Right ventricle myocardium inferior (tissue), 1 donor: ENCODE measurements at regions of chr17 and their contacts with region 1.

Region 1: DNA sequence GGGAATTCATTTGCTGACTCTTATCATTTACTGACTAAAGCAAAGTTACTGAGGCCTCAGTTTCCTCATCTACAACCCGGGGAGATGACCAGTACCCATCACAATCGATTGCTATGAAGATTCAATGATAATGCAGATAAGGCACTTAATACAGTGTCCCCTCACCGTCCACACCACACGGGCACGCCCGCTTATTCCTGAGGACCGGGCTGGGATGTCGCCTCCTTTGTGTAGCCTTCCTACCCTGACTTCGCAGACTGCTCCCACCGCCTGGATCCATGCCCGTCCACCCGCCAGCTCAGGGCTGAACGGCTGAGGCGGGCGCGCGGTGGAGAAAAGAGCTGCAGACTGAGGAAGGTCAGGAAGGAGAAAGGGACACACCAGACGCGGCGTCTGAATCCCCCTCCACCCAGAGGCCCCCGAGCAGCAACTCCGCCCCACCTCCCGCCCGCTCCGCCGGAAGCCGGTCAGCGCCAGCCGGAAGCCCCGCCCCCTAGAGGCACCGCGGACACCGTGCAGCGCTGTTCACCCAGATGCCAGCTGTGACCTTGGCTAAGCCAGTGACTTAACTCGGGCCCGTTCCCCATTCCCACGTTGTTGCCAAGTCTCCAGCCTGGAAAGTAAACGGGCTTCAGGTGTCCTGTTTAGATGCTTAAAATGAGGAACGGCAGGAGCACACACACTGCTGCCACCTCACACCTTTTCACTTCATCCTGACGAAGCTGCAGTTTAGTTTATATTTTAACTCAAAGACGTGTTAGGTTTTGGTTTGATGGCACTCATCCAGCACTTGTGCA is at the start of gene KRABD2:
- DNase-seq: peak; percentile 94
- ATAC-seq: peak; percentile 98

Region 2: DNA sequence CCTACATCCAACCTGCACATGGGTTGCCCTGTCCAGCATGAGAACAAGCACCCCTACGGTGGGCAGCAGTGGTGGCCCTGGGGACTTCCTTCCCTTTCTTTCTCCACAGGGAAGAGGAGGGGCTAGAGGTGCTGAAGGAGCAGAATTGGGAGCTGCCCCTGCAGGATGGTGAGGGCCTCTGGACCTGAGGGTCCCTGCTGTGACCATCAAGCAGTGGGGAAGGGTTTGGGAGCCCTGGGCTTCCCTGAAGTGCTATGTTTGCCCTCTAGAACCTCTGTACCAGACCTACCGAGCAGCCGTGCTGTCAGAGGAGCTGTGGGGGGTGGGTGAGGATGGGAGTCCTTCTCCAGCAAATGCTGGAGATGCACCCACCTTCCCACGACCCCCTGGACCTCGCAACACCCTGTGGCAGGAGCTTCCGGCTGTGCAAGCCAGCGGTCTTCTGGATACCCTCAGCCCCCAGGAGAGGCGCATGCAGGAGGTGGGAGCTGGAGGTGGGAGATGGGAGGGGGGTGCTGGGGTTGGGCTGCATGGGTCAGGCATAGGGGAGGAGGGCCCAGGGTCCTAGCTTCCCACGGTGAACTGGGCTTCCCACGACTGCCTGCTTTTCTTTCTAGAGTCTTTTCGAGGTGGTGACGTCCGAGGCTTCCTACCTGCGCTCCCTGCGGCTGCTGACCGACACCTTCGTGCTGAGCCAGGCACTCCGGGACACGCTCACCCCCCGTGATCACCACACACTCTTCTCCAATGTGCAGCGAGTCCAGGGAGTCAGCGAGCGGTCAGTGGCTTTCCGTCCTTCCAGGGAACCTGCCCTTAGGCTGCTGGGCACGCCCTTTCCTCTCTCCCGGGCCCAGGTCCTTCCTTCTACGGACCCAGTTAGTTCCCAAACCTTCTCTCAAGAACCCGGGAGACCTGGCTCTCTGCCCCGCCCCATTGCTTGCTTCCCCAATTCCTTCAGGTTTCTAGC is 61.4 kb before region 1 on chr17:
- intact Hi-C with region 1: loop called (anchors 5 kb)
- DNase-seq: no peak
- ATAC-seq: no peak

Region 3: DNA sequence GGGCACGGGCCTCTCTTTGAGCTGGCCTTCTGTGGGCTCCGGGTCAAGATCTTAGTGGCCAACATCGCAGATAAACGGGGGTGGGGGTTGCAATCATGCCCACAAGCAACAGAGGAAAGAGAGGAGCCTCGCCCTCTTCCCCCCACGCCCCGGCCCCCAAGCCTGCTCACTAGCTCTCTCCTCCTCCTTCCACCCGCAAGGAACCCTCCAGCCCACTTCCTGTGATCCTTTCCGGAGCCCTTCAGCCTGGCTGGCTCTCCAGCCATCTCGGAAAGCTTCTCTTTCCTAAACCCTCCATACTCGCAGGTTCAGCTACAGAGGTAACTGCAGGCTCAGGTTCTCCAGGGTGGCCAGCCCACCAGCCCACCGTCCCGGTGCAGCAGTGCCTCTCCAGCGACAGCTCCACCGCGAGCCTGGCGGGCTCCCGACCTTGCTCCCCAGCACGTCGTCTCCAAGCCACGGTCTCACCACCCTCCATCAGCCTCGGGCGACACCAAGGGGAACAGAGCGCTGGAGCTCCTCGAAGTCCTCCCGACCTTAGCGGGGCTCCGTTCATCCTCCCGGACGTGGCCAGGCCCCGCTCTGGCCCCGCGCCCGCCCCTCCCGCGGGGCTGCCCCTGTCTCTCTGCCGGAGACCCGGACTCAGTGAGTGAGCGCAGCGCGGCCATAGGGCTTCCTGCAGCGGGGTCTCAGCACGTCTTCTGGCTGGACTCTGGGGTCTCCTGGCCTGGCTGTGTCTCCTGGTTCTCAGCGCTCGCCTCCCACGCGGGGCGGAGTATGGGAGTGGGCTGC is 49.8 kb before region 1 on chr17:
- intact Hi-C with region 1: no loop called
- DNase-seq: no peak
- ATAC-seq: peak; percentile 71

Region 4: DNA sequence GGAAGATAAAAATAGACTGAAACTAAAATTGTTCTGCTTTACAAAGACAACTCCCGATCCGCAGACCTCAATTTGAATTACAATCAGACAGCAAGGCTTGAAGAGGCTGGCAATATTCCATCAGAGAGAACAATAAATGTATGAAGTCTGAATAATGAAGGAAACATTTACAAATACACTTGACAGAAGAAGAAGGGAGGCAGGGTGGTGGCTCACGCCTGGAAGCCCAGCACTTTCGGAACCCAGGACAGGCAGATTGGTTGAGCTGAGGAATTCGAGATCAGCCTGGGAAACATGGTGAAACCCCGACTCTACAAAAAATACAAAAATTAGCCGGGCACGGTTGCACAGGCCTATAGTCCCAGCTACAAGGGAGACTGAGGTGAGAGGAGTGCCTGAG is 22.2 kb before region 1 on chr17:
- intact Hi-C with region 1: no loop called
- DNase-seq: no peak
- ATAC-seq: no peak